Endothelial cell of umbilical vein (primary cell): ENCODE measurements at regions of chr13 and their contacts with region 1.

Region 1: GRCh38 chr13:45807520-45808099 is 43.9 kb downstream of the SIAH3 start:
- DNase-seq: peak; percentile 63
- H3K4me3 ChIP-seq: no peak overlapping the region
- H3K27ac ChIP-seq: no peak overlapping the region
- H3K4me1 ChIP-seq: no peaks in the 10 kb centered on the region
- H3K27me3 ChIP-seq: peaks cover 2 to 4% of the 10 kb centered on the region in 2 experiments
- CTCF ChIP-seq: peak; percentile 53 to 60
- POLR2A ChIP-seq: no peak

Region 2: DNA sequence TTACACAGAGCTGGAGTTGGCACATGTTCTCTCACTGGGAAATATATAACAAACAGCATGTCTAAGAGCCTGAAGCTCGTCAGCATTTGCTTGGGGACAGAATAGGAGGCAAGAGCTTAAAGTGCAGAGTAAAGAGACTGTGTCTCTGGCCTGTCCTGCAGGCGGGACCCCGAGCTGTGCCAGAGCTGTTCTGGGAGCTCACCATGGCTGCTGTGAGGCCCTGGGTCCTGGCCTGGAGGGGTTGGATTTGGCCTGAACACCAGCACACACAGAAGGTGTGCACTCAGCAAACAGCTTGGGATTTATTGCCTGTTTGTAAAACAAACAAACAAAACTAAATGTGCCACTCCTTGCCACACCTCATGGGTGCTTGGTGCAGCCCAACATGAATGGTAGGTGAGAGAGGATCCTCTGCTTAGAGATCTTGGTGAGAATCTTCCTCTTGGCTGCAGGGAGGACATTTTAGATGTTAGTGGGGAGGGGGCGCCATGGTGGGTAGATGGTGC is 253.0 kb before region 1 on chr13:
- CTCF ChIA-PET with region 1: no interaction called
- POLR2A ChIA-PET with region 1: no interaction called
- dilution Hi-C with region 1: no loop called
- intact Hi-C with region 1: no loop called
- DNase-seq: no peak
- H3K4me3 ChIP-seq: no peak overlapping the region
- H3K27ac ChIP-seq: no peak overlapping the region
- H3K4me1 ChIP-seq: no peaks in the 10 kb centered on the region
- H3K27me3 ChIP-seq: peaks cover 4 to 10% of the 10 kb centered on the region in 2 experiments
- CTCF ChIP-seq: no peak
- POLR2A ChIP-seq: no peak

Region 3: DNA sequence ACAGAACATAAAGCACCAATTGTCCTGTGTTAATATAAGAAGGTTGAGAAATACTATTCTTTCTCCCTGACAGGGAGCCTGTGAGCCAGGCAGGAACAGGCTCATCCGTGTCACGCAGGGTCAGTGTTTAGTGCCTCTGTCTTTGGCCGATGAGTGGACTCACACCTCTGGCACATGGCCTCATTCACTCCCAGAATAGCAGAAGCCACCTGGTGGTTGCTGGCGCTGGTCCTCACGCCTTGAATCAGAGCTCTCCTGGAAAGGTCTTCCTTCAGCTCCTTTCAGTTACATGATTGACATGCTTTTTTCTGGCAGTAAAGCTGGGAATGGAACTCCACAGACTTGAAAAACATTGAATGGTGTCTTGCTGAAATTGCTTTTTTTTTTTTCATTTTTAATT is 72.1 kb after region 1 on chr13:
- CTCF ChIA-PET with region 1: interaction called, 22 read pairs
- POLR2A ChIA-PET with region 1: no interaction called
- dilution Hi-C with region 1: no loop called
- intact Hi-C with region 1: loop called (anchors 5 kb)
- DNase-seq: peak; percentile 17
- H3K4me3 ChIP-seq: no peak overlapping the region
- H3K27ac ChIP-seq: no peak overlapping the region
- H3K4me1 ChIP-seq: no peaks in the 10 kb centered on the region
- H3K27me3 ChIP-seq: peaks cover 5 to 8% of the 10 kb centered on the region in 2 experiments
- CTCF ChIP-seq: peak; percentile 24 to 31
- POLR2A ChIP-seq: no peak

Region 4: GRCh38 chr13:46052319-46053161 is 244.9 kb after region 1 on chr13 and contains the start of gene ZC3H13:
- CTCF ChIA-PET with region 1: interaction called, 7 read pairs
- POLR2A ChIA-PET with region 1: no interaction called
- dilution Hi-C with region 1: no loop called
- intact Hi-C with region 1: loop called (anchors 2 kb)
- DNase-seq: peak; percentile 93
- H3K4me3 ChIP-seq: peak within 1 kb of the TSS; percentile 83 to 98 (median 96)
- H3K27ac ChIP-seq: peak within 1 kb of the TSS; percentile 86
- H3K4me1 ChIP-seq: peaks cover 26% of the 10 kb centered on the region
- H3K27me3 ChIP-seq: no peaks in the 10 kb centered on the region
- CTCF ChIP-seq: peak; percentile 8 to 15
- POLR2A ChIP-seq: peak; percentile 67
- total RNA-seq, gene ZC3H13: 32.0 and 36.6 TPM in 2 replicates

Region 5: DNA sequence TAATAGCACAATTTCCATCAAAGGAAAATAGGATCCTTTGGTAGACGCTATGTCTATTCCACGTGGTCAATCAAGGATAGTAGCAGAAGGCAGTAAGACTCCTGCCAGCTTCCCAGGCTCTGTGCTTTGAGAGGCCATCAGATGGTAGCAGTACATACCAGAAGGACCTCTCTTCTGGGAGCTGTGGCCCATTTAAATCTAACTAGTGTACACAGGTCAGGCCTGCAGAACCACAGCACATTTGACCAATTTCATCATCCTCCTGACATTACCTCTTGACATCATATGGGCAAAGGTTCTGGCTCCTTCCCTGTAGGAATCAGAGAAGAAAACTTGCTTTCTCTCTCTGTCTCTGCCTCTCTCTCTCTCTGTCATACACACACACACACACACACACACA is 1318.8 kb after region 1 on chr13:
- CTCF ChIA-PET with region 1: no interaction called
- POLR2A ChIA-PET with region 1: no interaction called
- dilution Hi-C with region 1: no loop called
- intact Hi-C with region 1: no loop called
- DNase-seq: no peak
- H3K4me3 ChIP-seq: no peak overlapping the region
- H3K27ac ChIP-seq: no peak overlapping the region
- H3K4me1 ChIP-seq: no peaks in the 10 kb centered on the region
- H3K27me3 ChIP-seq: no peaks in the 10 kb centered on the region
- CTCF ChIP-seq: no peak
- POLR2A ChIP-seq: no peak